Caco-2 (cell line): ENCODE measurements at regions of chr19 and their contacts with region 1.

Region 1: GRCh38 chr19:48271531-48272151 is 1.8 kb downstream of the ZNF114 start:
- DNase-seq: peak; percentile 61 to 67
- H3K4me3 ChIP-seq: peak overlapping the region; percentile 66
- H3K4me3 Mint-ChIP-seq: peak overlapping the region; percentile 78
- H3K27ac Mint-ChIP-seq: peak overlapping the region; percentile 86
- H3K4me1 ChIP-seq: peaks cover 9% of the 10 kb centered on the region
- H3K4me1 Mint-ChIP-seq: peaks cover 25% of the 10 kb centered on the region
- H3K27me3 ChIP-seq: no peaks in the 10 kb centered on the region
- H3K27me3 Mint-ChIP-seq: no peaks in the 10 kb centered on the region
- CTCF ChIP-seq: no peak

Region 2: GRCh38 chr19:47973529-47973928 is 298.1 kb before region 1 on chr19:
- CTCF ChIA-PET with region 1: no interaction called
- POLR2A ChIA-PET with region 1: interaction called, 13 read pairs
- intact Hi-C with region 1: no loop called
- DNase-seq: no peak
- H3K4me3 ChIP-seq: no peak overlapping the region
- H3K4me3 Mint-ChIP-seq: no peak overlapping the region
- H3K27ac Mint-ChIP-seq: no peak overlapping the region
- H3K4me1 ChIP-seq: no peaks in the 10 kb centered on the region
- H3K4me1 Mint-ChIP-seq: no peaks in the 10 kb centered on the region
- H3K27me3 ChIP-seq: no peaks in the 10 kb centered on the region; the same call in none of the 2 replicates
- H3K27me3 Mint-ChIP-seq: peaks cover 31% of the 10 kb centered on the region
- CTCF ChIP-seq: no peak

Region 3: DNA sequence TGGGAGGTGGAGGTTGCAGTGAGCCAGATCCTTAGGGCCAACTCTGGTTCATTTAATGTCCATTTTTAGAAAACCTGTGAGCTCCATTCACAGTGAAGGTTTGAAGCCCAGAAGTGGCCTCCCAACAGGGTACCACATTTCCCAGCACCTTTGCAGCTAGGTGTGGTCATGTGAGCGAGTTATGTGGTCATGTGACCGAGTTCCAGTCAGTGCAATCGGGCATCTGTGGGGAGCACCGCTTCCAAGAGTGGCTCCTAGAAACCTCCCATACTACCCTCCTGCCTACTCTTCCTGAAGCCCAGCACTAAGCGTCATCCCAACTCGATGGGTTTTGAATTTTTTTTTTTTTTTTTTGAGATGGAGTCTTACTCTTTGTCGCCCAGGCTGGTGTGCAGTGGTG is 160.4 kb before region 1 on chr19:
- CTCF ChIA-PET with region 1: no interaction called
- POLR2A ChIA-PET with region 1: no interaction called
- intact Hi-C with region 1: no loop called
- DNase-seq: no peak
- H3K4me3 ChIP-seq: no peak overlapping the region
- H3K4me3 Mint-ChIP-seq: peak overlapping the region; percentile 73
- H3K27ac Mint-ChIP-seq: no peak overlapping the region
- H3K4me1 ChIP-seq: peaks cover 7% of the 10 kb centered on the region
- H3K4me1 Mint-ChIP-seq: peaks cover 8% of the 10 kb centered on the region
- H3K27me3 ChIP-seq: no peaks in the 10 kb centered on the region
- H3K27me3 Mint-ChIP-seq: no peaks in the 10 kb centered on the region
- CTCF ChIP-seq: no peak

Region 4: GRCh38 chr19:48290771-48291488 is 19.3 kb after region 1 on chr19:
- CTCF ChIA-PET with region 1: interaction called, 5 read pairs
- POLR2A ChIA-PET with region 1: interaction called, 3 read pairs
- intact Hi-C with region 1: loop called (anchors 1 kb)
- DNase-seq: peak; percentile 72 to 89
- H3K4me3 ChIP-seq: peak overlapping the region; percentile 42
- H3K4me3 Mint-ChIP-seq: peak overlapping the region; percentile 82
- H3K27ac Mint-ChIP-seq: peak overlapping the region; percentile 42
- H3K4me1 ChIP-seq: peaks cover 12% of the 10 kb centered on the region
- H3K4me1 Mint-ChIP-seq: peaks cover 7% of the 10 kb centered on the region
- H3K27me3 ChIP-seq: no peaks in the 10 kb centered on the region; the same call in 1 of the 2 replicates
- H3K27me3 Mint-ChIP-seq: no peaks in the 10 kb centered on the region
- CTCF ChIP-seq: peak; percentile 96 to 98

Region 5: DNA sequence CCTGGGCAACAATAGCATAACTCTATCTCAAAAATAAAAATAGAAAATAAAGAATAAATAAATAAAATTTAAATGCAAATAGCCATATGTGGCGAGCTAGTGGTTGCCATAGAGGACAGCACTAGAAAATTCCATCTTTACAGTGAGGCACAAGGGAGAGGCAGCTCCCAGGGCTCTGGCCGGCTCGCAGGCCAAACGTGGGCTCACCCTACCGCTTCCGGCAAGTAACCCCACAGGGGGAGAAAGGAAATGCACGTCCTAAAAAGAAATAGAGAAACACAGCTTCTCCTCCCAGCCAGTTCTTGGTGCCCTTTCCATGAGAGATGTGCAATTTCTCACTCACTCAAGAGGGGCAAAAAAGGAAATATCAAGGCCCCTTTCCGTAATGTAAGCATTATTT is 161.7 kb after region 1 on chr19:
- CTCF ChIA-PET with region 1: interaction called, 12 read pairs
- POLR2A ChIA-PET with region 1: no interaction called
- intact Hi-C with region 1: no loop called
- DNase-seq: no peak
- H3K4me3 ChIP-seq: no peak overlapping the region
- H3K4me3 Mint-ChIP-seq: no peak overlapping the region
- H3K27ac Mint-ChIP-seq: no peak overlapping the region
- H3K4me1 ChIP-seq: no peaks in the 10 kb centered on the region
- H3K4me1 Mint-ChIP-seq: peaks cover 7% of the 10 kb centered on the region
- H3K27me3 ChIP-seq: no peaks in the 10 kb centered on the region
- H3K27me3 Mint-ChIP-seq: no peaks in the 10 kb centered on the region
- CTCF ChIP-seq: no peak